Dorsolateral prefrontal cortex (tissue), 120 donors: ENCODE measurements at regions of chr2 and their contacts with region 1.

Region 1: GRCh38 chr2:203650860-203651613 is 55.4 kb upstream of the CD28 start:
- DNase-seq: peak in 1 of 10 donors; percentile 37
- H3K4me3 ChIP-seq: peak overlapping the region in 1 of 59 donors; percentile 20
- H3K27ac ChIP-seq: peak overlapping the region in 43 of 59 donors; percentile 0 to 75 (median 57)
- H3K27me3 ChIP-seq: no peaks in the 10 kb centered on the region
- CTCF ChIP-seq: peak in 55 of 56 donors; percentile 10 to 78 (median 55)

Region 2: GRCh38 chr2:203484266-203485112 is 166.5 kb before region 1 on chr2:
- intact Hi-C with region 1: loop called (anchors 2 to 5 kb)
- DNase-seq: peak in 1 of 10 donors; percentile 24
- H3K4me3 ChIP-seq: no peak overlapping the region
- H3K27ac ChIP-seq: no peak overlapping the region
- H3K27me3 ChIP-seq: no peaks in the 10 kb centered on the region
- CTCF ChIP-seq: peak in 54 of 56 donors; percentile 28 to 78 (median 62)

Region 3: GRCh38 chr2:203535078-203535783 is 115.8 kb before region 1 on chr2 and contains the start of gene RAPH1:
- intact Hi-C with region 1: loop called in 1 of 2 experiments (anchors 5 kb)
- DNase-seq: peak; percentile 44 to 86 (median 74)
- H3K4me3 ChIP-seq: peak within 1 kb of the TSS; percentile 59 to 98 (median 87)
- H3K27ac ChIP-seq: peak within 1 kb of the TSS in 58 of 59 donors; percentile 23 to 97 (median 90)
- H3K27me3 ChIP-seq: no peaks in the 10 kb centered on the region
- CTCF ChIP-seq: peak in 5 of 56 donors; percentile 3 to 41 (median 8)
- total RNA-seq, gene RAPH1: 17.3 to 71.2 (median 39.5) TPM

Region 4: GRCh38 chr2:203887677-203888076 is 236.6 kb after region 1 on chr2:
- intact Hi-C with region 1: loop called in 1 of 2 experiments (anchors 5 kb)
- DNase-seq: no peak
- H3K4me3 ChIP-seq: peak overlapping the region in 1 of 59 donors; percentile 1
- H3K27ac ChIP-seq: peak overlapping the region in 19 of 59 donors; percentile 2 to 62 (median 37)
- H3K27me3 ChIP-seq: peaks cover 0 to 19% (median 0%) of the 10 kb centered on the region in 45 donors
- CTCF ChIP-seq: peak in 2 of 56 donors; percentile 12 to 20